ENCODE measurements at regions of chr1 and their contacts with region 1.

Region 1: GRCh38 chr1:111507411-111508201 is 4.2 kb upstream of the ADORA3 start:
- DNase-seq: peak; percentile 48 to 78 (median 49)
- H3K4me3 ChIP-seq: peak overlapping the region; percentile 31 to 50
- H3K4me3 Mint-ChIP-seq: peak overlapping the region; percentile 63 to 89 (median 86)
- H3K27ac ChIP-seq: peak overlapping the region; percentile 76
- H3K27ac Mint-ChIP-seq: peak overlapping the region in 6 of 7 donors; percentile 93 to 98 (median 96)
- H3K4me1 ChIP-seq: peaks cover 96% of the 10 kb centered on the region
- H3K4me1 Mint-ChIP-seq: peaks cover 41 to 61% (median 53%) of the 10 kb centered on the region in 4 donors
- H3K27me3 ChIP-seq: no peaks in the 10 kb centered on the region
- H3K27me3 Mint-ChIP-seq: no peaks in the 10 kb centered on the region

Region 2: GRCh38 chr1:111481387-111482221 is 26.0 kb before region 1 on chr1:
- CTCF ChIA-PET with region 1: interaction called, 116 read pairs
- POLR2A ChIA-PET with region 1: interaction called, 170 read pairs
- intact Hi-C with region 1: no loop called
- DNase-seq: peak in 4 of 5 donors; percentile 41 to 54 (median 52)
- H3K4me3 ChIP-seq: no peak overlapping the region
- H3K4me3 Mint-ChIP-seq: no peak overlapping the region
- H3K27ac ChIP-seq: no peak overlapping the region
- H3K27ac Mint-ChIP-seq: peak overlapping the region in 3 of 7 donors; percentile 11 to 80 (median 47)
- H3K4me1 ChIP-seq: peaks cover 29% of the 10 kb centered on the region
- H3K4me1 Mint-ChIP-seq: peaks cover 31 to 55% (median 44%) of the 10 kb centered on the region in 4 donors
- H3K27me3 ChIP-seq: no peaks in the 10 kb centered on the region
- H3K27me3 Mint-ChIP-seq: no peaks in the 10 kb centered on the region

Region 3: GRCh38 chr1:111592389-111593361 is 85.1 kb after region 1 on chr1:
- CTCF ChIA-PET with region 1: interaction called, 29 read pairs
- POLR2A ChIA-PET with region 1: interaction called, 38 read pairs
- intact Hi-C with region 1: loop called (anchors 2 kb)
- DNase-seq: peak; percentile 66 to 98 (median 77)
- H3K4me3 ChIP-seq: peak overlapping the region in 1 of 2 donors; percentile 15
- H3K4me3 Mint-ChIP-seq: peak overlapping the region; percentile 6 to 81 (median 69)
- H3K27ac ChIP-seq: peak overlapping the region; percentile 46
- H3K27ac Mint-ChIP-seq: peak overlapping the region; percentile 85 to 94 (median 92)
- H3K4me1 ChIP-seq: peaks cover 68% of the 10 kb centered on the region
- H3K4me1 Mint-ChIP-seq: peaks cover 48 to 57% (median 51%) of the 10 kb centered on the region in 4 donors
- H3K27me3 ChIP-seq: no peaks in the 10 kb centered on the region
- H3K27me3 Mint-ChIP-seq: no peaks in the 10 kb centered on the region

Region 4: GRCh38 chr1:111628153-111628552 is 120.5 kb after region 1 on chr1:
- CTCF ChIA-PET with region 1: interaction called, 44 read pairs
- POLR2A ChIA-PET with region 1: interaction called, 10 read pairs
- intact Hi-C with region 1: loop called (anchors 10 kb)
- DNase-seq: no peak
- H3K4me3 ChIP-seq: peak overlapping the region in 1 of 2 donors; percentile 1
- H3K4me3 Mint-ChIP-seq: peak overlapping the region; percentile 13 to 88 (median 70)
- H3K27ac ChIP-seq: peak overlapping the region; percentile 20
- H3K27ac Mint-ChIP-seq: peak overlapping the region; percentile 25 to 91 (median 83)
- H3K4me1 ChIP-seq: peaks cover 97% of the 10 kb centered on the region
- H3K4me1 Mint-ChIP-seq: peaks cover 70 to 92% (median 81%) of the 10 kb centered on the region in 4 donors
- H3K27me3 ChIP-seq: no peaks in the 10 kb centered on the region
- H3K27me3 Mint-ChIP-seq: no peaks in the 10 kb centered on the region

Region 5: DNA sequence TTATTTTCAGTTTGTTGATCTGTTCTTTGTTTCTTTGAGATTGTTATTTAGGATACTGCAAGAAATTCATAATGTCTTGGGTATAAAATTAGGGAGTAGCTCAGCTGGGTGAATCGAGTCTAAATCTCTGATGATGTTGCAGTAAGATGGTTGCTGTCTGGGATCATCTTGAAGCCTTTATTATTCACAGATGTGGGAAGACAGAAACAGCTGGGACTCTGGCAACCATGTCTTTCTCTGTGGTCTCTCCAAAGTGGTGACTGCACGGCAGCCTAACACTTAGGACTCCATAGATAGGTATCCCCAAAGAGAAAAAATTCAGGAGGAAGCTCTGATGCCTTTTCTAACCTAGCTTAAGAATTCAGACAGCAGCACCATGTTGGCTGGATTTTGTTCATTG is 164.7 kb after region 1 on chr1:
- CTCF ChIA-PET with region 1: interaction called, 12 read pairs
- POLR2A ChIA-PET with region 1: interaction called, 3 read pairs
- intact Hi-C with region 1: no loop called
- DNase-seq: no peak
- H3K4me3 ChIP-seq: no peak overlapping the region
- H3K4me3 Mint-ChIP-seq: peak overlapping the region in 5 of 8 donors; percentile 11 to 45 (median 29)
- H3K27ac ChIP-seq: no peak overlapping the region
- H3K27ac Mint-ChIP-seq: peak overlapping the region in 5 of 7 donors; percentile 14 to 76 (median 54)
- H3K4me1 ChIP-seq: peaks cover 63% of the 10 kb centered on the region
- H3K4me1 Mint-ChIP-seq: peaks cover 56 to 87% (median 67%) of the 10 kb centered on the region in 4 donors
- H3K27me3 ChIP-seq: no peaks in the 10 kb centered on the region
- H3K27me3 Mint-ChIP-seq: no peaks in the 10 kb centered on the region

Region 6: DNA sequence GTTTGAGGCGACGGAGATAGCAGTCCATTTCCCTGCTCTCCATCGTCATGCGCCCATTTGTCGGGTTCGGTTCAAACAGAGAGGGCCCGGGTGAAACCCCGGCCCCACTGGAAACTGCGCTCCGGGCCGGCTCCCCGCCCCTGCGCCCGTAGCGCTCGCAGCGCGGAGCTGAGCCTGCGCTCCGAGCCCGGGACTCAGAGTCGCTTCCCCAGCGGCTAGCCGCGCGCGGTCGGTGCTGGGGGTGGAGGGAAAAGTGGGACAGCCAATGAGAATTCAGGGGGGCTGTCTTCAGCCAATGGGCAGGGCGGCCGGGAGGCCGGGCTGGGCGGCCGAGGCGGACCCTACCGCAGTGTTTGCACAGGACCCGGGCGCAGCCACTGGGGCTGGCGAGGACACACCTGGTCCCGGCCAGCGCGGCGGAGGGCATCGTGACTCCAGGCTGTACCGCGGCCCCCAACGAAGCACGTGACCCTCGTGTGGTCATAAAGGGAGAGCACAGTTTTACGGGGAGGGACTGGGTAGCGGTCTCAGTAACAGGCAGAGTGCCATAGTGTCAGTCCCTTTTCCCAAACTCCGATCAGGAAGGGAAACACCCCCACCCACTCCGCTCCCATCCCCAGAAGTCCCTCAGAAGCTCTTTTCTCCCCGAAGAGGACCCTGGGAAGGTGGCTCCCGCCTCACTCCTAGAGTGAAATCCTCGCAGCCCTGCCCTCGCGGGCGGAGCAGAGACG is 231.8 kb after region 1 on chr1 and contains the start of gene INKA2:
- CTCF ChIA-PET with region 1: interaction called, 13 read pairs
- POLR2A ChIA-PET with region 1: interaction called, 19 read pairs
- intact Hi-C with region 1: no loop called
- DNase-seq: peak; percentile 44 to 64 (median 48)
- H3K4me3 ChIP-seq: peak within 1 kb of the TSS; percentile 68 to 70
- H3K4me3 Mint-ChIP-seq: peak within 1 kb of the TSS; percentile 83 to 93 (median 89)
- H3K27ac ChIP-seq: peak within 1 kb of the TSS; percentile 37
- H3K27ac Mint-ChIP-seq: peak within 1 kb of the TSS; percentile 42 to 96 (median 86)
- H3K4me1 ChIP-seq: peaks cover 28% of the 10 kb centered on the region
- H3K4me1 Mint-ChIP-seq: peaks cover 10 to 27% (median 17%) of the 10 kb centered on the region in 4 donors
- H3K27me3 ChIP-seq: peaks cover 18% of the 10 kb centered on the region
- H3K27me3 Mint-ChIP-seq: peaks cover 6 to 18% of the 10 kb centered on the region in 2 donors
- total RNA-seq, gene INKA2: 2.2 to 2.4 TPM

Measured in CD4-positive, alpha-beta memory T cell (primary cell).